ENCODE measurements at regions of chr16 and their contacts with region 1.

Region 1: GRCh38 chr16:74716355-74716754 is 15.7 kb upstream of the MLKL start:
- DNase-seq: no peak
- H3K4me3 ChIP-seq: no peak overlapping the region
- H3K27ac ChIP-seq: no peak overlapping the region
- H3K4me1 ChIP-seq: no peaks in the 10 kb centered on the region
- H3K27me3 ChIP-seq: no peaks in the 10 kb centered on the region
- CTCF ChIP-seq: no peak

Region 2: GRCh38 chr16:74843719-74844433 is 127.5 kb after region 1 on chr16:
- CTCF ChIA-PET with region 1: no interaction called
- POLR2A ChIA-PET with region 1: interaction called, 11 read pairs
- intact Hi-C with region 1: no loop called
- DNase-seq: peak; percentile 12 to 49
- H3K4me3 ChIP-seq: peak overlapping the region; percentile 6; the same call in 1 of the 2 replicates
- H3K27ac ChIP-seq: peak overlapping the region; percentile 68
- H3K4me1 ChIP-seq: peaks cover 12% of the 10 kb centered on the region; the same call in 1 of the 2 replicates
- H3K27me3 ChIP-seq: no peaks in the 10 kb centered on the region
- CTCF ChIP-seq: no peak

Region 3: DNA sequence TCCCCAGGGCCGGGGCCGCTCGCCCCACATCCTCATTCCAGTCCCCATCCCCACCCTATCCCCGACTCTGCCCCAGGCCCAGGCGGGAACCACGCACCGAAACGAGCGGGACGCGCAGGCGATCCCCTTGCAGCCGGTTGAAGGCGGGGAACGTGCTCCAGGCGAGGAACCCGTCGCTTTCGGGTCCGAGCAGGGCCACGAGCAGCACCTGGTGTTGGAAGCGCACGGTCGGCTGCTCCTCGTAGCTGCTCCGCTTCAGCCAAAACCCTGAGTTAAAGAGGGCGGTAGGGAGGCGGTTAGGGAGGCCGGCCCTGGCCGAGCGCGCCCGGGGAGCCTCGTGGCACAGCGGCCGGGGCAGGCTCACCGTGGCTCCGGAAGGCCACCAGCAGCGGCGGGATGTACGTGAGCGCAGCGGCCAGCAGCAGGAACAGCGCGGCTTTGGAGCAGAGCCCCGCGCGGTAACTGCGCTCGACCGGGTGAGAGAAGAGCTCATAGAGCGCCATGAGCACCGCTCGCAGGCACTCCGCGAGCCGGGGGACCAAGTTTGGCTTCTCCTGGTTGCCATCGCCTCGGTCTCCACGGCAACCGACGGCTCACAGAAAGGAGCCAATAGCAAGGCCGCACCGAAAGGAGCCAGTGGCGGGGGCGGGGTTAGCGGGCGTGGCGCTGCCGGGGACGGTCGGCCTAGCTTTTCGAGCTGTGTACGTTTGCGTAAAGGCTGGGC is 839.5 kb after region 1 on chr16 and contains the start of gene TMEM231:
- CTCF ChIA-PET with region 1: interaction called, 12 read pairs
- POLR2A ChIA-PET with region 1: no interaction called
- intact Hi-C with region 1: no loop called
- DNase-seq: peak; percentile 88 to 91
- H3K4me3 ChIP-seq: peak within 1 kb of the TSS; percentile 100
- H3K27ac ChIP-seq: peak within 1 kb of the TSS; percentile 58
- H3K4me1 ChIP-seq: peaks cover 32% of the 10 kb centered on the region
- H3K27me3 ChIP-seq: no peaks in the 10 kb centered on the region
- CTCF ChIP-seq: no peak
- total RNA-seq, gene TMEM231: 17.7 and 18.8 TPM in 2 replicates